Activated T-helper 2 cell treated with anti-CD3 and anti-CD28 coated beads, Interferon-gamma antibody, Interleukin-2, Interleukin-4, amounts not matched to agents 10 μg/mL and 5 μg/mL and 100 μg/mL, durations not matched to agents 14 hours and 24 hours and 36 hours (primary cell): ENCODE measurements at regions of chr3 and their contacts with region 1.

Region 1: GRCh38 chr3:111737706-111738086 is 121.4 kb upstream of the PHLDB2 start:
- DNase-seq: no peak
- H3K4me3 Mint-ChIP-seq: no peak overlapping the region
- H3K27ac Mint-ChIP-seq: peak overlapping the region; percentile 21
- H3K4me1 Mint-ChIP-seq: peaks cover 35% of the 10 kb centered on the region
- H3K27me3 Mint-ChIP-seq: peaks cover 3% of the 10 kb centered on the region

Region 2: GRCh38 chr3:111761309-111761831 is 23.7 kb after region 1 on chr3:
- intact Hi-C with region 1: loop called (anchors 2 kb)
- DNase-seq: no peak
- H3K4me3 Mint-ChIP-seq: no peak overlapping the region
- H3K27ac Mint-ChIP-seq: no peak overlapping the region
- H3K4me1 Mint-ChIP-seq: peaks cover 10% of the 10 kb centered on the region
- H3K27me3 Mint-ChIP-seq: no peaks in the 10 kb centered on the region